Activated B cell treated with CpG ODN at 0.5 μM for 24 hours (primary cell): ENCODE measurements at regions of chr7 and their contacts with region 1.

Region 1: GRCh38 chr7:41817386-41817785 is 114.5 kb upstream of the INHBA start:
- DNase-seq: no peak
- ATAC-seq: no peak
- H3K4me3 Mint-ChIP-seq: no peak overlapping the region
- H3K27ac Mint-ChIP-seq: no peak overlapping the region
- H3K4me1 Mint-ChIP-seq: peaks cover 17% of the 10 kb centered on the region
- H3K27me3 Mint-ChIP-seq: no peaks in the 10 kb centered on the region
- CTCF ChIP-seq: no peak

Region 2: GRCh38 chr7:41472427-41473125 is 344.8 kb before region 1 on chr7:
- CTCF ChIA-PET with region 1: no interaction called
- POLR2A ChIA-PET with region 1: interaction called, 12 read pairs
- intact Hi-C with region 1: no loop called
- DNase-seq: no peak
- ATAC-seq: no peak
- H3K4me3 Mint-ChIP-seq: no peak overlapping the region
- H3K27ac Mint-ChIP-seq: no peak overlapping the region
- H3K4me1 Mint-ChIP-seq: peaks cover 14% of the 10 kb centered on the region
- H3K27me3 Mint-ChIP-seq: peaks cover 2% of the 10 kb centered on the region
- CTCF ChIP-seq: no peak

Region 3: GRCh38 chr7:41803569-41803968 is 13.8 kb before region 1 on chr7:
- CTCF ChIA-PET with region 1: no interaction called
- POLR2A ChIA-PET with region 1: no interaction called
- intact Hi-C with region 1: no loop called
- DNase-seq: no peak
- ATAC-seq: no peak
- H3K4me3 Mint-ChIP-seq: no peak overlapping the region
- H3K27ac Mint-ChIP-seq: no peak overlapping the region
- H3K4me1 Mint-ChIP-seq: no peaks in the 10 kb centered on the region
- H3K27me3 Mint-ChIP-seq: no peaks in the 10 kb centered on the region
- CTCF ChIP-seq: no peak